ENCODE measurements at regions of chr16 and their contacts with region 1.

Region 1: GRCh38 chr16:21708533-21709115 is 44.9 kb downstream of the OTOA start:
- DNase-seq: peak; percentile 70 to 83 (median 72)
- H3K4me3 ChIP-seq: no peak overlapping the region
- H3K4me3 Mint-ChIP-seq: peak overlapping the region in 1 of 2 donors; percentile 53
- H3K27ac ChIP-seq: no peak overlapping the region
- H3K27ac Mint-ChIP-seq: no peak overlapping the region
- H3K4me1 ChIP-seq: peaks cover 15 to 22% of the 10 kb centered on the region in 2 donors
- H3K4me1 Mint-ChIP-seq: peaks cover 11% of the 10 kb centered on the region
- H3K27me3 ChIP-seq: no peaks in the 10 kb centered on the region
- H3K27me3 Mint-ChIP-seq: peaks cover 3 to 5% (median 4%) of the 10 kb centered on the region in 3 donors
- CTCF ChIP-seq: peak; percentile 83

Region 2: DNA sequence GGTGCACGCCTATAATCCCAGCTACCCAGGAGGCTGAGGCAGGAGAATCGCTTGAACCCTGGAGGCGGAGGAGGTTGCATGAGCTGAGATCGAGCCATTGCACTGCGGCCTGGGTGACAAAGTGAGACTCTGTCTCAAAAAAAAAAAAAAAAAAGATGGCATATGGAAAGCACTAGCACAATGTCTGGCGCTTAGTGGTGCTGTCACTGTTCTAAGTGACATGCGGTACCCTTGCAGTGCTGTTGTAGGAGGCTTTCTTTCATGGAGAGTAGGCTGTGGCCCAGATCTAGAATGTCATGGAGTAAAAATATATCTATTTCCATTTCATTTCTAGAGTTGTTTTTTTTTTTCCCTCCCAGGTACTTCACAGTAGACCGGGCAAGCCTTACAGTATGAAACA is 123.8 kb before region 1 on chr16:
- intact Hi-C with region 1: loop called (anchors 2 kb)
- DNase-seq: no peak
- H3K4me3 ChIP-seq: no peak overlapping the region
- H3K4me3 Mint-ChIP-seq: no peak overlapping the region
- H3K27ac ChIP-seq: no peak overlapping the region
- H3K27ac Mint-ChIP-seq: peak overlapping the region in 1 of 7 donors; percentile 61
- H3K4me1 ChIP-seq: peaks cover 33 to 41% of the 10 kb centered on the region in 2 donors
- H3K4me1 Mint-ChIP-seq: peaks cover 41% of the 10 kb centered on the region
- H3K27me3 ChIP-seq: no peaks in the 10 kb centered on the region
- H3K27me3 Mint-ChIP-seq: peaks cover 0 to 3% (median under 1%) of the 10 kb centered on the region in 3 donors
- CTCF ChIP-seq: no peak

Region 3: DNA sequence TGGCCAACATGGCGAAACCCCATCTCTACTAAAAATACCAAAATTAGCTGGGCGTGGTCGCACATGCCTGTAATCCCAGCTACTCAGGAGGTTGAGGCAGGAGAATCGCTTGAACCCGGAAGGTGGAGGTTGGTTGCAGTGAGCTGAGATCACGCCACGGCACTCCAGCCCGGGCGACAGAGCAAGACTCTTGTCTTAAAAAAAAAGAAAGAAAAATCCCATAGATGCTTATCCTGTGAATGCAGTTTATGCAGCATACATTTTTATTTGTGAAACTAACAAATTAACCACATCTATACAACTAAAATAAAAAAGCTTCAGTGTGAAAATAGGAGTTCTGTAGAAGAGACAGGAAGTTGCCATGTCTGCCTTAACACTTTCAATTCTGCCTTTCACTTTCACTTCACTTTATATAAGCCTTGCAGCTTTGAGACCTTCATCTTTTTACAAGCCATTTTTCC is 63.3 kb before region 1 on chr16:
- intact Hi-C with region 1: loop called in 1 of 2 experiments (anchors 5 kb)
- DNase-seq: peak in 2 of 3 donors; percentile 68 to 81
- H3K4me3 ChIP-seq: peak overlapping the region; percentile 39 to 98 (median 90)
- H3K4me3 Mint-ChIP-seq: peak overlapping the region; percentile 78 to 87
- H3K27ac ChIP-seq: peak overlapping the region; percentile 77 to 82
- H3K27ac Mint-ChIP-seq: peak overlapping the region; percentile 89 to 97 (median 95)
- H3K4me1 ChIP-seq: peaks cover 92 to 97% of the 10 kb centered on the region in 2 donors
- H3K4me1 Mint-ChIP-seq: peaks cover 71% of the 10 kb centered on the region
- H3K27me3 ChIP-seq: no peaks in the 10 kb centered on the region
- H3K27me3 Mint-ChIP-seq: no peaks in the 10 kb centered on the region
- CTCF ChIP-seq: no peak

Region 4: GRCh38 chr16:21656795-21657768 is 51.5 kb before region 1 on chr16:
- intact Hi-C with region 1: loop called (anchors 5 kb)
- DNase-seq: peak; percentile 50 to 69 (median 64)
- H3K4me3 ChIP-seq: peak overlapping the region in 2 of 3 experiments; percentile 22 to 55
- H3K4me3 Mint-ChIP-seq: peak overlapping the region; percentile 47 to 69
- H3K27ac ChIP-seq: peak overlapping the region; percentile 36 to 77
- H3K27ac Mint-ChIP-seq: peak overlapping the region; percentile 87 to 97 (median 94)
- H3K4me1 ChIP-seq: peaks cover 71 to 75% of the 10 kb centered on the region in 2 donors
- H3K4me1 Mint-ChIP-seq: peaks cover 78% of the 10 kb centered on the region
- H3K27me3 ChIP-seq: no peaks in the 10 kb centered on the region
- H3K27me3 Mint-ChIP-seq: peaks cover 0 to 5% (median under 1%) of the 10 kb centered on the region in 3 donors
- CTCF ChIP-seq: peak; percentile 94

Region 5: DNA sequence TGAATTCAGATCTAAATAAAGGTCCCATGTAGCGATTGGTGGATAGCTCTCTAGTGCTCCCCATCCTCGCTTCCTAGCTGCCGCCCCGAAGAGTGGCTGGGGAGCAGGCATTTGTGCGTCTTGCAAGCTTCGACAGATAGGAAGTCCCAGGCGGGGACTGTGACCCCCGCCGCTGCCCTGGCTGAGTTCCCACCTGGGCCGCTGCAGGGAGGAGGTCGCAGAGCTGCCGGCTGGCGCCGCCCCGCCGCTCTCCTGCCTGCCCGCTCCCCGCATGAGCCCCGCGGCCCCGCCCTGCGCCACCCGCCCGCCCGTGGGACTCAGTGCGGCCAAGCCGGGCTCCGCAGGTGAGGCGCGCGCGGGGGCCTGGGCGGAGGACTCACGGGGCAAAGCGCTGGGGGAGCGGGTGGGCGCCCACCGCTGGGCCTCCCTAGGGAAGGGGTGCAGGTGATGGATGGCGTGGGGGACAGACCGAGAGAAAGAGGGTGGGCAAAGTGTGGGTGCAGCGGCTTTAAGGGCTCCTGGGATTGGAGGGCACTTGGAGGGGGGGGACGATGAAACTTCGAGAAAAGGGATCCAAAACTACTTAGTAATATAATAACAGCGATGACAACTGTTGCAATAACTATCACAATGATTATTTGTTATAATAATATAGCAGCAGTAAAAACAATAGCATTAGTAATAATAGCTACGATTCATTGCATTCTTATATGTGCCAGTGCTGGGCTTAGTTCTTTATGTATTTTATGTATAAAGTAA is 44.6 kb before region 1 on chr16 and contains the start of gene OTOA:
- intact Hi-C with region 1: loop called (anchors 5 kb)
- DNase-seq: no peak
- H3K4me3 ChIP-seq: peak within 1 kb of the TSS in 1 of 3 experiments; percentile 63
- H3K4me3 Mint-ChIP-seq: peak within 1 kb of the TSS; percentile 71 to 90
- H3K27ac ChIP-seq: no peak within 1 kb of the TSS
- H3K27ac Mint-ChIP-seq: no peak within 1 kb of the TSS
- H3K4me1 ChIP-seq: peaks cover 14 to 21% of the 10 kb centered on the region in 2 donors
- H3K4me1 Mint-ChIP-seq: peaks cover 17% of the 10 kb centered on the region
- H3K27me3 ChIP-seq: peaks cover 0 to 4% of the 10 kb centered on the region in 2 donors
- H3K27me3 Mint-ChIP-seq: peaks cover 5 to 13% (median 11%) of the 10 kb centered on the region in 3 donors
- CTCF ChIP-seq: no peak
- polyA plus RNA-seq, gene OTOA: 0.11 to 0.23 (median 0.21) TPM

Region 6: GRCh38 chr16:21694609-21695008 is 14.0 kb before region 1 on chr16:
- intact Hi-C with region 1: no loop called
- DNase-seq: no peak
- H3K4me3 ChIP-seq: no peak overlapping the region
- H3K4me3 Mint-ChIP-seq: no peak overlapping the region
- H3K27ac ChIP-seq: no peak overlapping the region
- H3K27ac Mint-ChIP-seq: no peak overlapping the region
- H3K4me1 ChIP-seq: no peaks in the 10 kb centered on the region
- H3K4me1 Mint-ChIP-seq: peaks cover 8% of the 10 kb centered on the region
- H3K27me3 ChIP-seq: no peaks in the 10 kb centered on the region
- H3K27me3 Mint-ChIP-seq: peaks cover 0 to 8% (median 8%) of the 10 kb centered on the region in 3 donors
- CTCF ChIP-seq: no peak